Astrocyte of the cerebellum (primary cell): ENCODE measurements at regions of chr17 and their contacts with region 1.

Region 1: DNA sequence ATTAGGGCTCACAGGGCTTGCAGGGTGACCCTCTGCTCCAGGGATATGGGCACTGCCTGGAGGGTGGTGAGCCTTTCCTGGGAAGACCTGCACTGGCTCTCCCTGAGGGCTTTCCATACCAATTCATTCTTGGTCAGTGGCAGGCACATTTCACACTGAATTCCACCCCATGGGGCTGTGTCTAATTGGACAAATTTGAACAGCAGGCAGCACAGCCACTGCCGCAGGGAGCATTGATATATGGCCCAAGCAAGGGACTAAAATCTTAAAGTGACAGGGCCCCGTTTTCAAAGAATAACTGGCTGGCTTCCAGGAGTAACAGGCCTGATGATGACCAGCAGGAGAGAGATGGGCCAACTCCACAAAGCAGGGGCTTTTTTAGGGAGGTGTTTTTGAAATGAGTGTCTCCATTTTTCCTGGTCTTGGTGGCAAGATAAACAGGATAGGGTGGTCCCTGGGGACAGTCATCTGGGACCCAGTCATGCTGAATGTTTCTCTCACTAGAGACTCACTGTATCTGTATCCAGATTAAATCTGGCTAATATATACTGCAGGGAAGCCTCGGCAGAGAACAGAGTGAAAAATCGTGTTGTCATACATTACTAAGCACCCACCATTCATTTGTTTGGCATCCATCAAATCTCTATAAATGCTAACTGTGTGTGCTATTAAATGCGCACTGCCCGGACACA is 74.1 kb upstream of the TBX2 start:
- DNase-seq: no peak
- H3K4me3 ChIP-seq: no peak overlapping the region
- CTCF ChIP-seq: no peak

Region 2: DNA sequence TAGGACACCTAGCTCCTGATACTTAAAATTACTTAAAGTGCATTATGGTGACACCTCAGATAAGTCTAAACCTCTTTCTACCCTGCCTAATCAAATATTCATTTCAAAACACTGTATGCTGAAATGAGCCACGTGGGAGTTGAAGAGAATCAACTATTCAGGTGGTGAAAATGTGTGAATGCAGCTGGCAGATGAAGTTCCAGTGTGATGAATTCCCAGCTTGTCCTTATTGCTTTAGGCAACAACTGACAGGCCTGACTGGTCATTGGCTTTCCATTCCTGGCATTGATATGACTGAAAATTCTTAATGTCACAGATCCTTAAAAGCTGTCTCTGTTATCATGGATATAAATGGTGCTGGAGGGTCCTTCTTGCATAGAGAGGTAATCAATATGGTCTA is 227.7 kb before region 1 on chr17:
- in situ Hi-C with region 1: no loop called
- DNase-seq: no peak
- H3K4me3 ChIP-seq: no peak overlapping the region
- CTCF ChIP-seq: no peak

Region 3: DNA sequence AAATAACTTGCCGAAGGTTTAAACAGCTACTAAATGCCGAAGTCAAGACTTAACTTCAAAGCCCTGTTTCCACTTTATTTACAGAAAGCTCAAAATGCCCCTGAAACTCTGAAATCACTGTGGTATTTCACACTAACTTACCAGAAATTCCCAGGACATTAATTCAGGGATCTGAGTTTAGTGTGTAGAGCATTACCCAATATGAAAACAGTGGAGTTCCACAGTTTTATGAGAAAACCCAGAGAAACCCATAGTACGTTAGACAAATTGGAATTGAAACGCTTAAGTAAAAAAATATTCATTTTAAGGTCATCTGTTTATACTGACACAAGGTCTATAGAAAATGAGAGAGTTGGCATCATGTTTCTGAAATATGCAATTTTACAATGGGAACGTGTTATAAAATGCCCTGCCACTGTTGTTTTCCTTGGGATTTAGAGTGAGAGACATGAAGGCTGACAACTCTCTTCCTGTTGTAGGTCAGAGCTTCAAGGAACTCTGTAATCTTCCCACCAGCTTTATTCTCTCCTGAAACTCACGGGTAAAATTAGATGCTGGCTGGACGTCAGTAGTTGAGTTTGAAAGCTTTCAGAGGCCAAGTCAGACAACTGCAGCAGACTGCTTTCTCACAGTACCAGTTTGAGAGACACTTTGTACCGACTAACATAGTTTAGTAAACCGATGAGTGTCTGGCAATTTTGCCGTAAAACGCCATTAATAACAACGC is 65.3 kb before region 1 on chr17:
- in situ Hi-C with region 1: loop called (anchors 5 kb)
- DNase-seq: no peak
- H3K4me3 ChIP-seq: no peak overlapping the region
- CTCF ChIP-seq: no peak

Region 4: DNA sequence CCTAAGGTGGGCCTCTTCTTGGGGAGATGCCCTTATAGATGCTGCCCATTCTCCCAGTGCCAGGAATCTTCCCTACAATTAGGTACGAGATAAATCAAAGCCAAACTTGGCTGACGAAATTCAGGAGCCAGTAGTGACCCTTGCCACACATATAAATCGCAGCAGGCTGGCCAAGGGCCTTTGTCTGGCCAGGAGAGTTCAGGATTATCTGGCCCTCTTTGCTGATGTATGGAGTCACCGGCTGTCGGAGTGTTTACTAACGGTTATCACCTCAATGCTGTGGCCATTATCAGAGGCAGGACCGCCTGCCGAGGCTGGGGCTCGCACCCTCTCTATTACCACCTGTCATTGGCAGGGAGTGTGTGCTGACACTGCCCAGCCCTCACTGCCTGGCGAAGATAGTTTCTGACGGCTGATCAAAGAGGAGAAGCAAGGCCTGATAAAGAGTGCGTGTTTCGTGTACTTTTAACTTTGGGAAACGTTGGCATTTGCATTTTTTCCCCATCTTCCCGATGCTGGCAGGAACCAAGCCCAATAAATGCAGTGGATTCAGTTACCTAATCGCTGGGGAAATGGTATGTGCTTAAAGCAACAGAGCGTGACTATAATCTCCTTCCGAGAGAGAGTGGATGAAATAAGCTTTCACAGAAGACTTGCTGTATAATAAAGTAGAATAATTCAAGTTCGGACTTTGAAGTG is 41.3 kb after region 1 on chr17:
- in situ Hi-C with region 1: loop called (anchors 5 kb)
- DNase-seq: no peak
- H3K4me3 ChIP-seq: no peak overlapping the region
- CTCF ChIP-seq: no peak